ENCODE measurements at regions of chr1 and their contacts with region 1.

Region 1: DNA sequence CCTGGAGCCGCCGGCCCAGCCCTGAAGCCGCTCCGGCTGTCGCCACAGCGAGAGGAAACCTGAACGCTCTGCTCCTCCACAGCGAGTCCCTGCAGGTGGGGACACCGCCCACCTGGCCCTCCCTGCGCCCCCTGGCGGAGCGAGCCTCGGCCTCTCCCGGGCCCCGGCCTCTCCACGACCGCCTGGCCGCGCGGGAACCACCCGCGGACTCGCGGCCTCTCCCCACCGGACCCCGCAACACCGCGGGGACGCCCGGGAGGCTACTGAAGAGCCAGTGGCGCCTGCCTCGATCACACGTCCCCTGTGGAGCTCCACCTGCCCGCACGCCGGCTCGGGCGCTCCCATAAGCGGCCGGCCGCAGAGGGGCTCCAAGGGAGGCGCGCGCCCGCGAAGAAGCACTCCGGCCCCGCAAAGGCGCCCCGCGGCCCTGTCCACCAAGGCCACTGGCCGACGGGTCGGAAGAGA is 109.6 kb downstream of the KCNN3 start:
- ATAC-seq: peak; percentile 68 to 99 (median 95)
- H3K4me3 ChIP-seq: peak overlapping the region; percentile 28 to 42 (median 31)
- H3K27ac ChIP-seq: no peak overlapping the region
- H3K4me1 ChIP-seq: no peaks in the 10 kb centered on the region

Region 2: GRCh38 chr1:154878371-154879022 is 118.0 kb after region 1 on chr1:
- in situ Hi-C with region 1: loop called in 1 of 9 experiments (anchors 25 kb)
- ATAC-seq: peak; percentile 89 to 100 (median 99)
- H3K4me3 ChIP-seq: peak overlapping the region in 2 of 5 donors; percentile 6 to 7
- H3K27ac ChIP-seq: no peak overlapping the region
- H3K4me1 ChIP-seq: peaks cover 4 to 15% of the 10 kb centered on the region in 2 donors

Measured in motor neuron (in vitro differentiated cells).